Breast epithelium (tissue), 4 donors: ENCODE measurements at regions of chr17 and their contacts with region 1.

Region 1: DNA sequence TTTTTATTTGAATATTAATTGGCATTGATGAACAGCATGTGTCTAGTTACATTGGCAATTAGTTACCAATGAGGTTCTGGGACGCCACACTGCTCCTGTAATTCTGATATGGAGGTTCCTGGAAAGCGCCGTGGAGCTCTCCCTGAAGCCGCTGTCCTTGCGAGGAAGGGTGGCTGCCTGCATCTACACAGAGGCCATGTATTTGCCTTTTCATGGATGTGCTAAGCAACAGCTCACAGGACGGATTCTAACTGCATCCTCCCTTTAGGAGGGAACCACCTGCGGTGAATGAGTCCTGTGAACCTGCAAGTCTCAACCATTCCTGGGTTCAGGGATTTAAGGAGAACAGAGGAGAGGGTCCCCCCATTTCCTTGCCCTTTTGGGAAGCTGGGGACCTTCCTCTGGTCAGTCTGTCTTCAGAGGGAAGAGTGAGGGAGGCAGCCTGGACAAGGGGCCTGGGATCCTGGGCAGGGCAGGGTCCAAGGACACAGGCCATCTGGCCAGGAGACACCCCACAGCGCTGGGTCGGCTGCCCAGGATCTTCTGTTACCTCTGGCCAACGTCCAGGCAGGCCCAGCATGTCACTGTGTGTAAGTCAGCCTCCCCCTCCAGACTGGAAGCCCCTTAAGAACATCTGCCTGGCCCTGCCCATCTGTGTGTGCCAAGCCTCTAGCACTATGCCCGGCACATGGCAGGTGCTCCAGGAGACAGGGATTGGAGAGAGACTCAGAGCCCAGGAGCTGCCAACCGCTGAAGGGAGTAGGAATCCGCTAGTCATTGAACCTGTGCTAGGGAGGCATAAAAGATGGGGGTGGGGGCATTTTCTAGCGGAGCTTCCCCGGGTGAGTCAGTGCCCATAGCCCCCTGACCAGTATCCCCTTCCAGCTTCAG is 314.1 kb upstream of the TNRC6C start:
- DNase-seq: no peak
- H3K4me3 ChIP-seq: no peak overlapping the region
- H3K27ac ChIP-seq: no peak overlapping the region
- H3K4me1 ChIP-seq: no peaks in the 10 kb centered on the region
- H3K27me3 ChIP-seq: no peaks in the 10 kb centered on the region
- CTCF ChIP-seq: no peak
- POLR2A ChIP-seq: no peak

Region 2: DNA sequence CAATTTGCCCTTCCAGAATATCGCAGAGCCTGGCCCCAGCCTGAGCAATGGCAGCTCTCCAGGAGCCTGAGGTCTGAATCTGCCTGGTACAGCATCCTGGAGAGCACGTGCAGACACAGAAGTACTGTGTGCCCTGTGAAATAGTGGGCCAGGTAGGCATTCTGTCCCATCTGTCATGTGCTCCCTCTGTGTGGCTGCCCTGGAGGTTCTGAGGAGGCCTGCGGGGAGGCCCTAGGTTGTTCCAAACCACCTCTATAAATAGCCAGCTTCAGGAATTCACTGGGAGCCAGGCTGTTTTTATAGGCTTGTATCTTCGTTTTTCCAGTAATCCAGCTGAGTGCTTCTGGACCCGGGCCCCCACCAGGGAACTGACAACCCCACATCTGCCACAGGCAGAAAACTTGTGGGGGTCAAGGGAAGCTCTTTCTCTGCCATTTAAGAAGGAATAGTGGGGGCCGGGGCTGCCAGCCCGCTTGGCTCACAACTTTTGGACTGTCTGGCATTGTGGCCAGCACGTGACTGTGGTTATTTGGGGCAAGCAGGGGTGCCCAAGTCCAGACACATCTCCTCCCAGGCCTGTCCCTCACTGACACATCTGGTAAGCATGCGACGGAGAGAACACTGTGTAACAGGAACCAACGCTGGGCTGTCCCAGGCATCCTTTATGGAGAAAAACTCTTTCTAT is 42.2 kb before region 1 on chr17:
- intact Hi-C with region 1: loop called (anchors 1 kb)
- DNase-seq: peak in 1 of 2 donors; percentile 87
- H3K4me3 ChIP-seq: no peak overlapping the region
- H3K27ac ChIP-seq: peak overlapping the region; percentile 84 to 93
- H3K4me1 ChIP-seq: peaks cover 0 to 10% of the 10 kb centered on the region in 2 donors
- H3K27me3 ChIP-seq: no peaks in the 10 kb centered on the region
- CTCF ChIP-seq: no peak
- POLR2A ChIP-seq: no peak